ENCODE measurements at regions of chr16 and their contacts with region 1.

Region 1: GRCh38 chr16:89574681-89575246 is 794 bp upstream of the CPNE7 start:
- DNase-seq: peak; percentile 61
- ATAC-seq: peak; percentile 88
- H3K4me3 ChIP-seq: peak overlapping the region; percentile 28; the same call in 1 of the 2 replicates
- H3K27ac ChIP-seq: no peak overlapping the region; the same call in 1 of the 2 replicates
- H3K4me1 ChIP-seq: peaks cover 15% of the 10 kb centered on the region
- H3K27me3 ChIP-seq: peaks cover 4% of the 10 kb centered on the region; the same call in 1 of the 2 replicates
- CTCF ChIP-seq: peak; percentile 96
- POLR2A ChIP-seq: 0 out of 2 replicates have a peak, but pooled peaks have one; percentile 15
- RAD21 ChIP-seq: peak; percentile 94

Region 2: DNA sequence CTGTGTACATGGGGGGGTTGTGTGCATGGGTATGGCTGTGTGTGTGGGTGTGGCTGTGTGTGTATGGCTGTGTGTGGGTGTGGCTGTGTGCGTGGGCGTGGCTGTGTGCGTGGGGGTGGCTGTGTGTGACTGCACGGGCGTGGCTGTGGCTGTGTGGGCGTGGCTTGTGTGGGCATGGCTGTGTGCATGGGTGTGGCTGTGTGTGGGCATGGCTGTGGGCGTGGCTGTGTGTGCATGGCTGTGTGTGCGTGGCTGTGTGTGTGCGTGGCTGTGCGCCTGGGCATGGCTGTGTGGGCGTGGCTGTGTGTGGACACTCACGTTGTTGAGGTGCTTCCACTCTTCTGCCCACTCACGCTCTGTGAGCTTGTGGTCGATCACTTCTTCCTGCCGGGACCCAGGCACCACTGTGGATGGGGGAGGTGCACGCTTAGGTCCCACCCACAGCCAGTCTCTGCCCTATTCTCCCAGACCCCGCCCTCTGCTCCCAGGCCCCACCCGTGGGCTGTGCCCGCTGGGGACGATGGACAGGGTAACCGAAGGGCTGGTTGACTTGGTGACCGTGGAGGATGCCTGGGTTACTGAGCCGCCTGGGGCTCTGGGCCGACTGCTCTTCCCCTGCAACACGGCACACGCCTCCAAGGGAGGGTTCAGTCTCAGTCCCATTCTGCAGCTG is 692.3 kb before region 1 on chr16:
- CTCF ChIA-PET with region 1: no interaction called
- POLR2A ChIA-PET with region 1: no interaction called
- dilution Hi-C with region 1: no loop called
- in situ Hi-C with region 1: no loop called
- intact Hi-C with region 1: no loop called
- DNase-seq: no peak
- ATAC-seq: no peak
- H3K4me3 ChIP-seq: no peak overlapping the region
- H3K27ac ChIP-seq: no peak overlapping the region
- H3K4me1 ChIP-seq: peaks cover 6% of the 10 kb centered on the region; the same call in 1 of the 2 replicates
- H3K27me3 ChIP-seq: peaks cover 24% of the 10 kb centered on the region
- CTCF ChIP-seq: no peak
- POLR2A ChIP-seq: no peak
- RAD21 ChIP-seq: no peak

Region 3: DNA sequence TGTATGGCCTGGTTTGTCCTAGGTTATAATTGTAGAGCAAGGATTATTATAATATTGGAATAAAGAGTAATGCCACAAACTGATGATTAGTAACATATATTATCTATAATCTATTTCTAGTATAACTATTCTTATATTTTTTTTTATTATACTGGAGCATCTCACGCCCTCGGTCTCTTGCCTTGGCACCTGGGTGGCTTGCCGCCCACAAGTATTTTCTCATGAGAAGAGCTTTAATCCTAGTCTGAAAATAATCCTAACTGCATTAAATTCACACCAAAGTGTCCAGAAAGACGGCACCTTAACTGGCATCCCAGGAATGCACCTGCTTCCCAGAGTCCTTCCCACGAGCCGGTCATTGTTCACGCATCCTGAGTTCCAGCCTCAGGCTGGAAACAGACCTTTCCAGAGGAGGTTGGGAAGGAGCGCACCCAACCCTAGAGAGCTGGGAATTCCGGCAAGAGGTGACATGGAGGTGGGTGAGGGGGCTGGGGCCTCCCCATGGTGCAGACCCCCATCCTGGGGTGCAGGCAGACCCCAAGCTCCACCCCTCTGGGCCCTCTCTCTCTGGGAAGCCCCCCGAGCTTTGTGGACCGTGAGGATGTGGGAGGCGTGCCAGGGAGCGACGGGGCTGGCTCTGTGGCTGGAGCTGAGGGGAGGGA is 66.8 kb after region 1 on chr16:
- CTCF ChIA-PET with region 1: no interaction called
- POLR2A ChIA-PET with region 1: no interaction called
- dilution Hi-C with region 1: no loop called
- in situ Hi-C with region 1: loop called (anchors 5 kb)
- intact Hi-C with region 1: loop called (anchors 1 kb)
- DNase-seq: no peak
- ATAC-seq: no peak; the same call in 1 of the 2 replicates
- H3K4me3 ChIP-seq: no peak overlapping the region
- H3K27ac ChIP-seq: no peak overlapping the region
- H3K4me1 ChIP-seq: peaks cover 2% of the 10 kb centered on the region; the same call in 1 of the 2 replicates
- H3K27me3 ChIP-seq: no peaks in the 10 kb centered on the region; the same call in 1 of the 2 replicates
- CTCF ChIP-seq: no peak
- POLR2A ChIP-seq: no peak
- RAD21 ChIP-seq: no peak

Region 4: DNA sequence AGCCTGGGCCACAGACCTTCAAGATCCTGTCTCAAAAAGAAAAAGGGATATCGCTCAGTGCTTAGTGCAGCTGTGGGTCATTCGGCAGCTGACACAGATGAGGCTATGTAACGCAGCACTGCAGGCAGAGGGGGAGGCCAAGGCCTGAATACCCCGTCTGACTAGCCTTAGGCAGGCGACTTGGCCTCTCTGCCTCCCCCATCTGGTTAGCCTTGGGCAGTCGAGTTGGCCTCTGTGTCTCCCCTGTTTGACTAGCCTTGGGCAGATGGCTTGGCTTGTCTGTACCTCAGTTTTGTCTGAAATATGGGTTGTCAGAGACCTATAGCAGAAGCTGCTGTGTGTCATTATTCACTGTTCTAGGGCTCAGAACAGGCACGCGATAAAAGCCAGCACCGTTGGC is 92.9 kb after region 1 on chr16:
- CTCF ChIA-PET with region 1: no interaction called
- POLR2A ChIA-PET with region 1: interaction called, 3 read pairs
- dilution Hi-C with region 1: no loop called
- in situ Hi-C with region 1: no loop called
- intact Hi-C with region 1: loop called (anchors 1 kb)
- DNase-seq: no peak
- ATAC-seq: no peak
- H3K4me3 ChIP-seq: no peak overlapping the region
- H3K27ac ChIP-seq: no peak overlapping the region
- H3K4me1 ChIP-seq: peaks cover 6% of the 10 kb centered on the region
- H3K27me3 ChIP-seq: no peaks in the 10 kb centered on the region
- CTCF ChIP-seq: no peak
- POLR2A ChIP-seq: no peak
- RAD21 ChIP-seq: no peak

Measured in IMR-90 (cell line).